Activated CD4-positive, alpha-beta memory T cell treated with anti-CD3 and anti-CD28 coated beads for 36 hours (primary cell): ENCODE measurements at regions of chr15 and their contacts with region 1.

Region 1: DNA sequence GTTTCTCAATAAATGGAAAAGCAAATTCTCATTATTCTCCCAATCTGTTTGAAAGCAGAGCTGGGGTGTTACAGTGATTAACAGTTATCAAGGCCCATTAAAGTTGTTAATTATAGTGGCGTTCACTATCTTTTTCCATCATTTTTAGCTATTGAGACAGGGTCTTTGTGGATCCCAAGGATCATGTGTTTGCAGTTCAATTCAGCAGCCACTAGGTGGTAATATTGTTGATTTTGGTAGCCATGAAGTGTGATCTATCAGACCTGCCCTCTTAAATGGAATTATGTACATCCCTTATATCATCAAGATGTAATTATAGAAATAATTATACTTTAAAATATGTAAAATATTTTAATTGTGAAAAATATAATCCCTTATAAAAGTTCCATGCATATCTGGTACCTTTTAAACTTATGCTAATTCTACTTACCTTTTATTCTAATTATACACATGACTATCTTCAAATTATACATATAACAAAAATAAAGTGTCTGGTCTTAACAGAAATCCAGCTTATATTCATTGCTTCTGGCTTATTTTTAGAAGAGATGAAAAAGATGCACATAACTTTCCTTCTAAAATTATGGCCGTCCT is 126.4 kb downstream of the GREM1 start:
- DNase-seq: no peak
- H3K4me3 Mint-ChIP-seq: no peak overlapping the region
- H3K27ac Mint-ChIP-seq: no peak overlapping the region
- H3K4me1 Mint-ChIP-seq: no peaks in the 10 kb centered on the region
- H3K27me3 Mint-ChIP-seq: peaks cover 3% of the 10 kb centered on the region

Region 2: GRCh38 chr15:32834156-32834555 is 10.1 kb before region 1 on chr15:
- CTCF ChIA-PET with region 1: interaction called, 14 read pairs
- POLR2A ChIA-PET with region 1: no interaction called
- intact Hi-C with region 1: no loop called
- DNase-seq: no peak
- H3K4me3 Mint-ChIP-seq: no peak overlapping the region
- H3K27ac Mint-ChIP-seq: no peak overlapping the region
- H3K4me1 Mint-ChIP-seq: no peaks in the 10 kb centered on the region
- H3K27me3 Mint-ChIP-seq: peaks cover 4% of the 10 kb centered on the region

Region 3: DNA sequence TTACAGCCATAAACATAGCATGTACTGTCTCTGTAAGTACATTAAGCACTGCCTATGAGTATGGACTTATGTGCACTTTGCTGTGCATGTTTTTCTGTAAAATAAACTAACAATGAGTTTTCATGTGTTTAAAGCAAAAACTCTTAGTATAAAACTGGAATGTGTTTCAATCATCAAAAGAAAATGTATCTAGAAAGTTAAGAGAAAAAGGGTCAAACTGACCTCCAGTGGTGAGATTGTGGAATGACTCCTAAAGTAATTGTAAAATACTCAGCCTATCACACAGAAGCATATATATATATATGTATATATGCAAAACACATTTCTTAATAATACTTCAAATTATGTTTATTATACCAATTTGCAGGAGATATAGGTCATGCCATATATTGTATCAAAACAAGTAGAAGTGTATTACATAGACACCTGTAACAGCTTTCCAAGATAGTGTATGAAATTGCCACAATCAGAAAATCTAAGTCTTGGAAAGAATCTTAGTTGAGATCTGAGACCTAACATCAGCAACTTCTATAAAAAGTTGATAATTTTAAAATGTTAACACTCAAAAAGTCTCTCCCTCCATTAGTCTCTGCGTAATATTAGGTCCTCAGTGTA is 150.7 kb after region 1 on chr15:
- CTCF ChIA-PET with region 1: interaction called, 8 read pairs
- POLR2A ChIA-PET with region 1: no interaction called
- intact Hi-C with region 1: loop called (anchors 10 kb)
- DNase-seq: no peak
- H3K4me3 Mint-ChIP-seq: no peak overlapping the region
- H3K27ac Mint-ChIP-seq: no peak overlapping the region
- H3K4me1 Mint-ChIP-seq: no peaks in the 10 kb centered on the region
- H3K27me3 Mint-ChIP-seq: peaks cover 11% of the 10 kb centered on the region